ENCODE measurements at regions of chr9 and their contacts with region 1.

Region 1: GRCh38 chr9:69193685-69194032 is 19.6 kb downstream of the TJP2 start:
- DNase-seq: no peak
- ATAC-seq: no peak
- H3K4me3 Mint-ChIP-seq: no peak overlapping the region
- H3K27ac Mint-ChIP-seq: no peak overlapping the region
- H3K4me1 Mint-ChIP-seq: peaks cover 8% of the 10 kb centered on the region
- H3K27me3 Mint-ChIP-seq: no peaks in the 10 kb centered on the region

Region 2: DNA sequence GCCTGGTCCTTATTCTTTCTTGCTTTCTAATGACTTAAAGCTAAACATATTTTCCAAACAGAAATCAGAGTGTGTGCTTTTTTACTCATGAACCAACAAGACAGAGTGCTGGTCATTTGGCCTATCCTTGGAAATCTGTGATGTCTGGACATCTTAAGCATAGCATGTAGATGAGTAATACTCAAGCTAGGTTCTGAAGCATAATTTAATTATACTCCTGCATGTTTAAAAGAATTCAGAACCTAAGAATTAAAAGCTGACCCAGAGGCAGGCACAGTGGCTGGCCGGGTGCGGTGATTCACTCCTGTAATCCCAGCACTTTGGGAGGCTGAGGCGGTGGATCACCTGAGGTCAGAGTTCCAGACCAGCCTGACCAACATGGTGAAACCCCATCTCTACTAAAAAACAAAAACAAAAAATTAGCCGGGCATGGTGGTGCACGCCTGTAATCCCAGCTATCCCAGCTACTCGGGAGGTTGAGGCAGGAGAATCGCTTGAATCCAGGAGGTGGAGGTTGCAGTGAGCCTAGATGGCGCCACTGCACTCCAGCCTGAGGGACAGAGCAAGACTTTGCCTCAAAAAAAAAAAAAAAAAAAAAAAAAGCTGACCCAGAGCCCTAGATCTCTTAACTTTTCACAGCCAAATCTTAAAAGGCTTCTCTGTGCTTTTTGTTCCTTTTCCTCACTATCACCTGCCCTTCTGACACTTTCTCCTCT is 35.8 kb before region 1 on chr9:
- CTCF ChIA-PET with region 1: interaction called, 15 read pairs
- POLR2A ChIA-PET with region 1: no interaction called
- intact Hi-C with region 1: loop called (anchors 1 to 2 kb)
- DNase-seq: peak; percentile 45
- ATAC-seq: no peak
- H3K4me3 Mint-ChIP-seq: no peak overlapping the region
- H3K27ac Mint-ChIP-seq: no peak overlapping the region
- H3K4me1 Mint-ChIP-seq: no peaks in the 10 kb centered on the region
- H3K27me3 Mint-ChIP-seq: no peaks in the 10 kb centered on the region

Region 3: GRCh38 chr9:69180670-69181069 is 13.0 kb before region 1 on chr9:
- CTCF ChIA-PET with region 1: interaction called, 27 read pairs
- POLR2A ChIA-PET with region 1: no interaction called
- intact Hi-C with region 1: no loop called
- DNase-seq: peak; percentile 78
- ATAC-seq: peak; percentile 98
- H3K4me3 Mint-ChIP-seq: no peak overlapping the region
- H3K27ac Mint-ChIP-seq: no peak overlapping the region
- H3K4me1 Mint-ChIP-seq: peaks cover 43% of the 10 kb centered on the region
- H3K27me3 Mint-ChIP-seq: peaks cover 8% of the 10 kb centered on the region